HepG2 (cell line): ENCODE measurements at regions of chr19 and their contacts with region 1.

Region 1: DNA sequence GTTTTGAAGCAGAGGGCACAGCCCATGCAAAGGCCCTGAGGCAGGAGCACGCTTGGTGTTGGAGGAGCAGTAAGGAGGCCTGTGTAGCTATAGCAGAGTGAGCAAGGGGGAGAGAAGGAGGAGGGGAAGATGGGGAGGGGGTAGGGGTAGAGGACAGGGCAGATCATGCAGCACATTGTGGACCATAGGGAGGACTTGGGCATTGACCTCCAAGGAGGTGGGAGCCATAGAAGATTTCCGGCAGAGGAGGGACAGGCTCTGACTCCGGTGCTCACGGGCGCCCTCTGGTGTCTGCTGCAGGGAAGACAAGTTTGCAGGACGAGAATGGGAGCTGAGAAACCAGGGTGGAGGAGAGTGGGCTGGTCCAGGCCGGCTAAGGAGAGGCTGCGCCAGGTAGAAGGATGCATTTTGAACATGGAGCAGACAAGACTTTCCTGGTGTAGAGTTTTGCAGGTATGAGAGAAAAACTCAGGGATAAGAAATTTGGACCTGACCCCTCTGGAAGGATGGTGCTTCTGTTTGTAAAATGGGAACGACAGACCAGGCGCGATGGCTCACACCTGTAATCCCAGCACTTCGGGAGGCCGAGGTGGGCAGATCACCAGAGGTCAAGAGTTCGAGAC is 13.7 kb upstream of the CREB3L3 start:
- DNase-seq: peak; percentile 58
- ATAC-seq: peak; percentile 74
- H3K4me3 ChIP-seq: no peak overlapping the region
- H3K27ac ChIP-seq: no peak overlapping the region
- H3K4me1 ChIP-seq: peaks cover 63% of the 10 kb centered on the region
- H3K27me3 ChIP-seq: no peaks in the 10 kb centered on the region; a peak in 1 of 5 replicates
- CTCF ChIP-seq: peak; percentile 87
- EP300 ChIP-seq: no peak
- POLR2A ChIP-seq: no peak
- RAD21 ChIP-seq: 0 out of 2 replicates have a peak, but pooled peaks have one; percentile 13

Region 2: DNA sequence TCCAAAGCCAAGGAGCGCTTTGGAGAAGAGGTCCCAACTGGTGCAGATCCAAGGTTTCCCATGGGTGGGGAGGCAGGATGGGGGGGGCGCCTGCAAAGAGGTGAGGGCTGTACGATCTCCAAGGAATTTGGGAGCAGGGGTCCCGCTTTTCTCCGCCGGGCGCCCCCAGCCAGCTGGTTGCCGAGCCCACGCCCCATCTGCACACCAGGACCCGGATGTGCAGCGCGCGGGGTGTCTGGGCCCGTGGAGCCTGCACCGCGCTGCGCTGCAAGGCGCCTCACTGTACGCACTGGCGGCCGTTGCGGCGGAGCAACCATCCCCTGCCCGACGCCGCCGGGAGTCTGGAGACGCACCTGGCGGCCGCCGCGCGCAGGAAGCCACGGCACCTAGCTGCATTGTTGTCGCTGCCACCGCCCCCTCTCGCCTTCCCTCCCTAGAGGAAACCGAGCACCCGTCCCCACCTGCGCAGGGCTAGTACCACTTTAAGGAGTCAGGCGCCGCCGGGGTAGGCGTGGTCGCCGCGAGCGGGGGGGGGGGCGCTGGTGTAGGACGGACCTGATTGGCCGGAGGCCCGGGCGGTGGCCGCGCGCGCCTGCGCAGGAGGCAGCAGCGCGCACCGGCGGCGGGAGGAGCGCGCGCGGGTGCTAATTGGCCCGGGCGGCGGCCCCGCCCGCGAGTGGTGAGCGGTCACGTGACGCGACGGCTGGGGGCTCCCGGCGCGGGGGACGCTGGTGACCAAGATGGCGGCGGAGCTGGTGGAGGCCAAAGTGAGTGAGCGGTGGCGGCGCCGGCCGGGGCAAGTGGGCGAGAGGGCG is 132.5 kb before region 1 on chr19 and contains the start of gene PIAS4:
- CTCF ChIA-PET with region 1: no interaction called
- POLR2A ChIA-PET with region 1: no interaction called
- in situ Hi-C with region 1: no loop called
- intact Hi-C with region 1: loop called (anchors 10 kb)
- DNase-seq: peak; percentile 87
- ATAC-seq: peak; percentile 91
- H3K4me3 ChIP-seq: peak within 1 kb of the TSS; percentile 90 to 100 (median 98)
- H3K27ac ChIP-seq: peak within 1 kb of the TSS; percentile 78
- H3K4me1 ChIP-seq: peaks cover 33% of the 10 kb centered on the region
- H3K27me3 ChIP-seq: no peaks in the 10 kb centered on the region; a peak in 1 of 5 replicates
- CTCF ChIP-seq: peak; percentile 35
- EP300 ChIP-seq: no peak; a peak in 1 of 4 replicates
- POLR2A ChIP-seq: peak; percentile 55 to 90; a peak in 3 of 4 replicates
- RAD21 ChIP-seq: peak; percentile 43; the same call in 1 of the 2 replicates
- total RNA-seq, gene PIAS4: 20.1 and 22.4 TPM in 2 replicates

Region 3: GRCh38 chr19:4058034-4058692 is 81.6 kb before region 1 on chr19:
- CTCF ChIA-PET with region 1: no interaction called
- POLR2A ChIA-PET with region 1: interaction called, 5 read pairs
- in situ Hi-C with region 1: no loop called
- intact Hi-C with region 1: loop called (anchors 10 kb)
- DNase-seq: peak; percentile 90
- ATAC-seq: peak; percentile 85
- H3K4me3 ChIP-seq: peak overlapping the region; percentile 33 to 69 (median 58)
- H3K27ac ChIP-seq: peak overlapping the region; percentile 94
- H3K4me1 ChIP-seq: peaks cover 69% of the 10 kb centered on the region
- H3K27me3 ChIP-seq: no peaks in the 10 kb centered on the region
- CTCF ChIP-seq: peak; percentile 67
- EP300 ChIP-seq: peak; percentile 11 to 45; a peak in 2 of 4 replicates
- POLR2A ChIP-seq: peak; percentile 78 to 80
- RAD21 ChIP-seq: peak; percentile 29; the same call in 1 of the 2 replicates

Region 4: DNA sequence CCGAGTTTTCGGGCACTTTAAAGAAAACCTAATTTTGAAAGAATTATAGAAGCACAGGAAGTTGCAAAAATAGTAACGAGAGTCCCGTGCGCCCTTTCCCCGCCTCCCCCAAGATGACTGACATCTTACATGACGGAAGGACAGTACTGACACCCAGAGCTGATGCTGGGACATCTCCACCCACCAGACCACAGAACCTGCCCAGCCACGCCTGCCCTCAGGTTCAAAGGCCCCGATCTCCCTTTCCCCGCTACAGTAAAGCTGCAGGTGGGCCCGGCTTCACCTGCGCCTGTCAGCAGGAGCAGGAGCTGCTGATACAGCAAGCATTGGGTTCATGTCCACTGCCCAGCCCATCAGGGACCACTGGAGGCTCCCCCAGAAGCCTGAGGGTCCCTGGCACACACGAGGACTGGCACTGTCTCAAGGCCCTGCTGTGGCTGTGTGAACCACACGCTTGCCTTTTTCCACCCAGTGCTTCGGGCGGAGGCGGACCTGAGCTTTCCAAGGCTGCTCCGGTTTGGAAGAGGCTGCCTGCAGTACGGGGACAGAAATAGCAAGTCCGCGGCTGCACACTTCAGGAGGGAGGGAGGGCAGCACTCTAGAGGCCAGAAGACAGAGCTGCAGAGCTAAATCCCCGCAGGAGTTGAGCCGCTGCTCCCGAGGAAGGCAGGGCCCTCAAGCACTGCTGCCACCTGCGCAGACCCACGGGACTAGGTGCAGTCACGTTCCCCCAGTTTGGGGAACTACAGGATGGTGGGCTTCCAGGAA is 24.5 kb before region 1 on chr19:
- CTCF ChIA-PET with region 1: no interaction called
- POLR2A ChIA-PET with region 1: no interaction called
- in situ Hi-C with region 1: no loop called
- intact Hi-C with region 1: no loop called
- DNase-seq: no peak
- ATAC-seq: no peak
- H3K4me3 ChIP-seq: no peak overlapping the region
- H3K27ac ChIP-seq: no peak overlapping the region
- H3K4me1 ChIP-seq: no peaks in the 10 kb centered on the region; the same call in 1 of the 2 replicates
- H3K27me3 ChIP-seq: no peaks in the 10 kb centered on the region
- CTCF ChIP-seq: no peak
- EP300 ChIP-seq: no peak
- POLR2A ChIP-seq: 0 out of 4 replicates have a peak, but pooled peaks of 1 of the 2 experiments have one; percentile 19
- RAD21 ChIP-seq: no peak

Region 5: DNA sequence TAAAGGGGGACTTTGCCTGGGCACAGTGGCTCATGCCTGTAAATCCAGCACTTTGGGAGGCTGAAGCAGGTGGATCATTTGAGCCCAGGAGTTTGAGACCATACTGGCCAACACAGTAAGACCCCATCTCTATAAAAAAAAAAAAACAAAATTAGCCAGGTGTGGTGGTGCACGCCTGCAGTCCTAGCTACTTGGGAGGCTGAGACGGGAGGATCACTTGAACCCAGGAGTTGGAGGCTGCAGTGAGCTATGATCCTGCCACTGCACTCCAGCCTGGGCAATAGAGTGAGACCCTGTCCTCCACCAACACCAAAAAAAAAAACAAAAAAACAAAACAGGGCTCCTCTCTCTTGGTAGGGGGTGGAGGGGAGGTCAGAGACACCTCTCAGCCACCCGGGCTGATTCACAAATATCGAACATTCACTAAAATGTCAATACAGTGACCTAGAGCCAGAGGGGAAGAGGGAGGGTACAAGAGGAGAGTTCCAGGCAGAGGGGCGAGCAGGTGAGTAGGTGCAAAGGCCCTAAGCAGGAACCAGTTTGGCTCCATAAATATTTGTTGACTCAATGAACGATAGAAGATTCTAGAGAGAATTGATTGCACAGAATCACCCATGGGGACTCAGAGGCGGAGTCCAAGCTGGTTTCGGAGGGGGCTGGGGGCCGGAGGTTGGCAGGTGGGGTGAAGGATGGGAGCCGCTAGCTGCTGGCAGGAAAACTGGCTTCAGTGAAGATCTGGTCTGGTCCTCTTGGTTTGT is 12.7 kb after region 1 on chr19:
- CTCF ChIA-PET with region 1: no interaction called
- POLR2A ChIA-PET with region 1: interaction called, 13 read pairs
- in situ Hi-C with region 1: no loop called
- intact Hi-C with region 1: no loop called
- DNase-seq: no peak
- ATAC-seq: no peak
- H3K4me3 ChIP-seq: peak overlapping the region in 2 of 3 experiments; percentile 20 to 62; a peak in 2 of 6 replicates
- H3K27ac ChIP-seq: peak overlapping the region; percentile 57
- H3K4me1 ChIP-seq: peaks cover 76% of the 10 kb centered on the region
- H3K27me3 ChIP-seq: no peaks in the 10 kb centered on the region
- CTCF ChIP-seq: no peak
- EP300 ChIP-seq: no peak
- POLR2A ChIP-seq: no peak
- RAD21 ChIP-seq: no peak

Region 6: DNA sequence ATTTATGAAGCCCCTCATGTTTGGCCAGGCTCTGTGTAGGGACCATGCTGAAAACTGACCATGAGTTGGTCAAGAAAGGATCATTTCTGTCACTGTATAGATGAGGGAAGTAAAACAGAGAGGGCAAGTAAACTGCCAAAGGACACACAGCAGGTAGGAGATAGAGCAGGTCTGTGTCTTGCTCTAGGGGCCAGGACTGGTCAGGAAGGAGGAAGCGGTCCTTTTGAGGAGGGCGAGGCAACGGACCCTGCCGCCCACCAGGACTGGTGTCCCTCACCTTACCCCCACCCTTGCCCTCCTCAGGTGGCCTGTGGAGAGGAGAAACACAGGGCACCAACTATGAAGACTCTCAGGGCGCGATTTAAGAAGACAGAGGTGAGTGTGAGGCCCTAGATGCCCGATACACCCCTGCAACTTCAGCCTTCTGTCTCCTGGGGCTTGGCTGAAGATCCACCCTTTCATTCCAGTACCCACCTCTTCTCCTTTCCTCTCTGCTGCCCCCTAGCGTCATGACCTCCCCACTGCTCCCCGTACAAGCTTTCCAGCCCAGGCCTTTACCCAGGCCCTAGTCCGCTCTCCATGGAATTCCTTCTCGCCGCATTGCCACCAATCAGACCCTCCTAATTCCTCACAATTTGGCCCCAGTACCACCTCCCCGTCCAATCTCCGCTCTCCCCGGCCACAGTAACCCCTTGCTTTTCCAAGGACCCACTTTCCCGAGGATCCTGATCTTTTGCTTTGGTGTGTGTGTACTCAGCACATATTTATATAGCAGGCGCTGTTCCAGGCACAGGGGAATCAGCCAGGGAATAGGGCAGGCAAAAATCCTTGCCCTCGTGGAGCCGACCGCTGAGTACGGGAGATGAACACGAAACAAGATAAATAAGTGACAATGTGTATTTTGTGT is 46.6 kb after region 1 on chr19:
- CTCF ChIA-PET with region 1: interaction called, 15 read pairs
- POLR2A ChIA-PET with region 1: no interaction called
- in situ Hi-C with region 1: no loop called
- intact Hi-C with region 1: loop called (anchors 5 kb)
- DNase-seq: peak; percentile 67
- ATAC-seq: peak; percentile 86
- H3K4me3 ChIP-seq: peak overlapping the region in 2 of 3 experiments; percentile 32 to 65; a peak in 2 of 6 replicates
- H3K27ac ChIP-seq: no peak overlapping the region
- H3K4me1 ChIP-seq: peaks cover 30% of the 10 kb centered on the region
- H3K27me3 ChIP-seq: no peaks in the 10 kb centered on the region; a peak in 1 of 5 replicates
- CTCF ChIP-seq: peak; percentile 93
- EP300 ChIP-seq: no peak
- POLR2A ChIP-seq: no peak
- RAD21 ChIP-seq: no peak